Heart left ventricle (tissue), 16 donors: ENCODE measurements at regions of chr22 and their contacts with region 1.

Region 1: DNA sequence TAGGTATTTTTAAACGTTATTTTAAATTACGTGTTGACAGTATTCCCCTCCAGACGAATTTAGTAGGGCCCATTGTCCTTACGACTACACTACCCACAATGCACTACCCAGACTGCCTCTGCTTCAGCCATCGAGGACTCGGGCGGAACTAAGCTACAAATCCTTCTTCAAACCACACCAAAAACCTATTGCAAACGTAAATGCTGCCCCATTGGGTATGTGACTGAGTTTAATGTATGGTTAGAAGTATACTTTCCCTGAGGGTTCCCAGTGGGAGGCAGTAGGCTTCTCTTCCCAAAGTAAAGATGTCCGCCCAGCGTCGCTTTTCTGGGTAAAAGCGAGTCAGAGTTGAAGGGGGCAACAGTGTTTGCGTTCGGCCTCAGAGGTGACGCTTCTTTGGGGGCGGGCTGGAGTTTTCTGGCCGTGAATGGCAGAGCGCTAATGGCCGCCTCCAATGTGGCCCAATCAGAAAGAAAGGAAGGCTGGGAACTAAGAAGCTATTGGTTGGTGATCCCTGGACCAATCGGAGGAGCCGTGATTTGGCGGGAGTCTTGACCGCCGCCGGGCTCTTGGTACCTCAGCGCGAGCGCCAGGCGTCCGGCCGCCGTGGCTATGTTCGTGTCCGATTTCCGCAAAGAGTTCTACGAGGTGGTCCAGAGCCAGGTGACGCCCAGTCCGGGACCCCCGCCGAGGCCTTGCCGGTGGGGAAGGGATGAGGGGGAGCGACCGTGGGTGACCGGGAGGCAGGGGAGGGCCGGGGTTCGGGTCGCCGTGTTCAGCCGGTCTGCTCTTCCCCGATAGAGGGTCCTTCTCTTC is at the start of gene CDC45:
- DNase-seq: peak; percentile 94 to 98 (median 97)
- ATAC-seq: peak; percentile 97 to 99 (median 98)
- H3K4me3 ChIP-seq: peak within 1 kb of the TSS; percentile 74 to 96 (median 86)
- H3K27ac ChIP-seq: peak within 1 kb of the TSS; percentile 94 to 99 (median 98)
- H3K4me1 ChIP-seq: peaks cover 6 to 30% (median 22%) of the 10 kb centered on the region in 12 donors
- H3K27me3 ChIP-seq: no peaks in the 10 kb centered on the region
- CTCF ChIP-seq: no peak
- POLR2A ChIP-seq: no peak
- total RNA-seq, gene CDC45: 0.16 to 3.1 (median 0.32) TPM in 5 of 9 donors, not detected in the others

Region 2: DNA sequence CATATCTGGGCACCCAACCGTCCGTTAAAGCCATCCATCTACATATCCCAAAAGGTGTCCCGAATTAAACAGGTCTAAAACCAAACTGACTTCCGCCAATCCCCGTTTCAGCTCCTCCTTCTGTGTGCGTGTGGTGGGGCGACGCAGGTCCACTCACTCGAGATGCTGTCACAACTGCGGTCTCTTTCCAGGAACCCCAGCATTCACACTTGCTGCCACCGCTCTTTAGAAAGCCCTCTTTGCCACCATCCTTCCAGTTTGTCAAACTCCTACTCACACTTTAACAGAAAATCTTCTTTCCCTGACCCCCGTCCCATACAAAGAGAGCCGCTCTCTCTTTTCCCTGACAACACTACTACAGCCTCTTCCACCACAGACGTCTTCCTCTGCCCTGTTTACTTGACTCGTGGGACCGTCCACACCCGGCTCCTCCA is 335.6 kb before region 1 on chr22:
- intact Hi-C with region 1: loop called in 2 of 10 experiments (anchors 5 to 10 kb)
- DNase-seq: no peak
- ATAC-seq: no peak
- H3K4me3 ChIP-seq: peak overlapping the region; percentile 61 to 94 (median 80)
- H3K27ac ChIP-seq: peak overlapping the region in 11 of 12 donors; percentile 3 to 86 (median 78)
- H3K4me1 ChIP-seq: peaks cover 0 to 15% (median 9%) of the 10 kb centered on the region in 12 donors
- H3K27me3 ChIP-seq: peaks cover 6 to 18% (median 13%) of the 10 kb centered on the region in 9 donors
- CTCF ChIP-seq: no peak
- POLR2A ChIP-seq: no peak

Region 3: DNA sequence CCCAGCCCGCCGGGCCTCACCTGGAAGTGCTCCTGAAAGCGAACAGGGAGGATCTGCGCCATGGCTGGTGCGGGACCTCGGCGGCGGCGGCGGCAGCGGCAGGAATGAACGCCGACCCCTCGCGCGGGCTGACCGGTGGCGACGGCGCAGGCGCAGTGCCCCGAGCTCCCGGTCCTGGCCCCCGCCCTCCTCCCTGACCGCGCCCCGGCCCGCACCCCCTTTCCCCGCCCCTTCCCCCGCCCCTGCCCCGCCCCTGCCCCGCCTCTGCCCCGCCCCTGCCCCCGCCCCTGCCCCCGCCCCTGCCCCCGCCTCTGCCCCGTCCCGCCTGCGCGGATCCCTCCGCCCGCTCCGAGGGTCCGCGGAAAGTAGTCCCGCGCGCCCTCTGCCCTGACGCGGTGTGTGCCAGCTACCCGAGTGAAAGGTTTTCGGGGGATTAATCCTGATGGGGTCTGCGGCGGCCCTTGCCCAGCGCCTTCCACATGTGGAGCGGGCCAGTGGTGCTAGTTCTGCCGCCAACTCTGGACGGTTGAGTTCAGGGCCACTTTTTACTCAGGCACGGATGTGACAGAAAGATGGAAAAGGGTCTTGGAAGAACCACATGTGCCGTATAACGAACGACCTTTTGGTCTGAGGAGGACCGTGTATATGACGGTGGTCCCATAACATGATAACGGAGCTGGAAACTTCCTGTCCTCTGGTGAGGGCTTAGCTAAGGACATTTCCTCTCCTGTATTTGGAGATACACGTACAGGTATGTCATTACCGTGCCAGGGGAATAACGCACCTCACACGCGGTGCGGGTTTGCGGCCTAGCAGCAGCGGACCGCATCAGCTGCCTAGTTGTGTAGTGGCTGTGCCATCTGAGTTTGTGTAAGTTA is 187.7 kb before region 1 on chr22 and contains the start of gene CLTCL1:
- intact Hi-C with region 1: loop called in 5 of 10 experiments (anchors 5 to 10 kb)
- DNase-seq: peak; percentile 86 to 93 (median 89)
- ATAC-seq: peak; percentile 65 to 94 (median 88)
- H3K4me3 ChIP-seq: peak within 1 kb of the TSS; percentile 62 to 100 (median 92)
- H3K27ac ChIP-seq: peak within 1 kb of the TSS; percentile 64 to 93 (median 82)
- H3K4me1 ChIP-seq: peaks cover 0 to 49% (median 24%) of the 10 kb centered on the region in 12 donors
- H3K27me3 ChIP-seq: no peaks in the 10 kb centered on the region
- CTCF ChIP-seq: no peak
- POLR2A ChIP-seq: peak in 1 of 2 donors; percentile 70
- total RNA-seq, gene CLTCL1: 7.6 to 20.9 (median 10.4) TPM

Region 4: DNA sequence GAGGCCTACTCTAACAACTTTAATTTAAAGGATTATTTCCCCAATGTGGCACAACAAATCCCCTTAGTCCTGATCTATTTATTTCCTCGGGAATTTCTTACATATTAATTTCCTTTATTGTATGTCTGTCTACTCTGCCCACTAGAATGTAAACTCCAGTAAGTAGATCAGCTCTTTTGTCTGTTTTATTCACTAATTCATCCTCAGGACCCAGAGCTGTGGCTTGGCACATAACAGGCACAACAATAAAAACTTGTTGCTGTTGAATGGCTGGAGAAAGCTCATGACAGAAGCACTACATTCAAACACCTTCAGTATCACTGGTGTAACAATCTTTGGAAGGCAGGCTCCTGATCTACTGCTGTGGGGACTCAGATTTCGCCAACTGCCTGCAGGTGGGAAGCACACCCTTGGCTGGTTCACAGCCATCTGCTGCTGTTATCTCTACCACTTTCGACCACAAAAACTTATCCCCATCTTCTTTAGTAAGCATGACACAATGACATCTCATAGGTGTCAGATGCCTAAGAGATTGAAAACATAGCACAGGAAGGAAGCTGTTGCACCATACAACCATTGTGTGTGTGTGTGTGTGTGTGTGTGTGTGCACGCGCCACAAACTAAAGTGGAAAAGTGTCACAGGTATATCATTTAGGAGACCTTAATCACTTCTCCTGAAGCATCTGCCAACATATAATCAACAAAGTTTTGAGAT is 59.9 kb before region 1 on chr22:
- intact Hi-C with region 1: no loop called
- DNase-seq: no peak
- ATAC-seq: peak in 1 of 4 donors; percentile 55
- H3K4me3 ChIP-seq: no peak overlapping the region
- H3K27ac ChIP-seq: peak overlapping the region in 2 of 12 donors; percentile 22 to 60
- H3K4me1 ChIP-seq: peaks cover 0 to 41% (median 18%) of the 10 kb centered on the region in 12 donors
- H3K27me3 ChIP-seq: no peaks in the 10 kb centered on the region
- CTCF ChIP-seq: no peak
- POLR2A ChIP-seq: no peak

Region 5: GRCh38 chr22:19447388-19448075 is 32.0 kb before region 1 on chr22 and contains the start of gene C22orf39:
- intact Hi-C with region 1: loop called in 3 of 10 experiments (anchors 1 to 2 kb)
- DNase-seq: peak; percentile 91 to 92 (median 92)
- ATAC-seq: peak; percentile 84 to 97 (median 94)
- H3K4me3 ChIP-seq: peak within 1 kb of the TSS; percentile 73 to 99 (median 91)
- H3K27ac ChIP-seq: peak within 1 kb of the TSS; percentile 76 to 97 (median 91)
- H3K4me1 ChIP-seq: peaks cover 2 to 54% (median 33%) of the 10 kb centered on the region in 12 donors
- H3K27me3 ChIP-seq: no peaks in the 10 kb centered on the region
- CTCF ChIP-seq: peak in 1 of 12 donors; percentile 7
- POLR2A ChIP-seq: peak in 1 of 2 donors; percentile 88
- total RNA-seq, gene C22orf39: 39.1 to 115 (median 64.5) TPM

Region 6: DNA sequence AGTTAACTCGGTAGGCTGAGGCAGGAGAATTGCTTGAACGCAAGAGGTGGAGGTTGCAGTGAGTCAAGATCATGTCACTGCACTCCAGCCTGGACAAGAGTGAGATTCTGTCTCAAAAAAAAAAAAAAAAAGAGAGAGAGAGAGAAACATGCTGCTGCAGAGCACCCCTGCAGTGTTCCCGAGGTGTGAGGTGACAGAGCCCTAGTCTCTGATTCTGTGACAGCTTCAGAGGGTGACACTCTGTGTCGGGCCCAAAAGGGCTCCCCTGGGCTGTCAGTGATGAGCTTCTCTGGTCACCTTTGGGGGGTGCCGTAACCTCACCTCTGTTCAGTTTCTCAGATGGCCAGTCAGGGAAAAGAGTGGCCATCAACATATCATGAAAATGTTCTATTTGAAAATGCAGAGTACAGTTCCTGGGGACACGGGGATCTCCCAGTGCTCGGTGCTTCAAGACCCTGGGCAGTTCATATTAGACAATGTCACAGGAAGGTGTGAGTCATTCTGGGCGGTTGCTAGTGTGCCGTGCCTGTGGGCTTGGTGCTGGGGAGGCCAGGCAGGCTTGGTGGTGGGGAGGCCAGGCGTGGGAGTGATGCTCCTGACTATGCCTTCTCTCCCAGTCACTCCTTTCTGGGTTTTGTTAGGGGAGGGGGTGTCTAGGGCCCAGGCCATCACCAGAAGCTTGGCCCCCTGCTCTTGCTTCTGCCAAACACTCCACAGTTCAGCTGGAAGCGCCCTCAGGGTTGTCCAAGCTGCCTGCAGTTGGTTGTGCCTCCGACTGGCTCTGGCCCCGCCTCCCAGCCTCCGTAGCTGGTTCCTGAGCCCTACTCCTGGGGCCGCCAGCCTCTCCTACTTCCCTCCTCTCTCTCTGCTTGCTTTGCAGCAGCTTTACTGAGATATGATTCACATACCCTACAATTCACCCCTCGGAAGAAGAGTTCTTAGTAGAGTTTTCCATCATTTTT is 97.2 kb after region 1 on chr22:
- intact Hi-C with region 1: no loop called
- DNase-seq: peak in 4 of 5 donors; percentile 44 to 70 (median 52)
- ATAC-seq: peak; percentile 76 to 83 (median 80)
- H3K4me3 ChIP-seq: no peak overlapping the region
- H3K27ac ChIP-seq: peak overlapping the region; percentile 37 to 78 (median 62)
- H3K4me1 ChIP-seq: peaks cover 0 to 47% (median 24%) of the 10 kb centered on the region in 12 donors
- H3K27me3 ChIP-seq: peaks cover 0 to 2% (median 0%) of the 10 kb centered on the region in 9 donors
- CTCF ChIP-seq: no peak
- POLR2A ChIP-seq: no peak